ENCODE measurements at regions of chr1 and their contacts with region 1.

Region 1: GRCh38 chr1:22704440-22705067 is 6.1 kb upstream of the EPHB2 start:
- DNase-seq: peak; percentile 90 to 91
- ATAC-seq: peak; percentile 92
- H3K4me3 ChIP-seq: no peak overlapping the region
- H3K27ac ChIP-seq: no peak overlapping the region
- H3K4me1 ChIP-seq: no peaks in the 10 kb centered on the region
- H3K27me3 ChIP-seq: no peaks in the 10 kb centered on the region

Region 2: GRCh38 chr1:22749919-22750688 is 45.5 kb after region 1 on chr1:
- intact Hi-C with region 1: no loop called
- DNase-seq: peak; percentile 62 to 72
- ATAC-seq: peak; percentile 60
- H3K4me3 ChIP-seq: no peak overlapping the region
- H3K27ac ChIP-seq: no peak overlapping the region
- H3K4me1 ChIP-seq: no peaks in the 10 kb centered on the region
- H3K27me3 ChIP-seq: no peaks in the 10 kb centered on the region

Region 3: DNA sequence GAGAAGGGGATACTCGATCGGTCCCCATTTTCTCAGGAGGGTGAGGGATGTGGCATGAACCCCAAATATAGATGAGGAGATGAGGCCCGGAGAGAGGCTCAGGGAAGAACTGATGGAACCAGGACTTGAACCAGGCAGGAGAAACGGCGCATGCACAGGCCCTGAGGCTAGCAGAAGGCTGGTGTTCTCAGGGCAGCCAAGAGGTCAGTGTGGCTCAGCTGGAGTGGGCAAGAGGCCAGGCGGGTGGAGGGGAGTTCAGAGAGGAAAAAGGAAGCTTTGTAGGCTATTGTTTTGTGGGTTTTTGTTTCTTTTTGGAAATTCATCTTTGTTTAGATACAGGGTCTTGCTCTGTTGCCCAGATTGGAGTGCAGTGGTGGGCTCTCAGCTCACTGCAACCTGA is 146.1 kb after region 1 on chr1:
- intact Hi-C with region 1: no loop called
- DNase-seq: peak in 1 of 2 donors; percentile 88
- ATAC-seq: no peak
- H3K4me3 ChIP-seq: no peak overlapping the region
- H3K27ac ChIP-seq: no peak overlapping the region
- H3K4me1 ChIP-seq: no peaks in the 10 kb centered on the region
- H3K27me3 ChIP-seq: no peaks in the 10 kb centered on the region

Region 4: DNA sequence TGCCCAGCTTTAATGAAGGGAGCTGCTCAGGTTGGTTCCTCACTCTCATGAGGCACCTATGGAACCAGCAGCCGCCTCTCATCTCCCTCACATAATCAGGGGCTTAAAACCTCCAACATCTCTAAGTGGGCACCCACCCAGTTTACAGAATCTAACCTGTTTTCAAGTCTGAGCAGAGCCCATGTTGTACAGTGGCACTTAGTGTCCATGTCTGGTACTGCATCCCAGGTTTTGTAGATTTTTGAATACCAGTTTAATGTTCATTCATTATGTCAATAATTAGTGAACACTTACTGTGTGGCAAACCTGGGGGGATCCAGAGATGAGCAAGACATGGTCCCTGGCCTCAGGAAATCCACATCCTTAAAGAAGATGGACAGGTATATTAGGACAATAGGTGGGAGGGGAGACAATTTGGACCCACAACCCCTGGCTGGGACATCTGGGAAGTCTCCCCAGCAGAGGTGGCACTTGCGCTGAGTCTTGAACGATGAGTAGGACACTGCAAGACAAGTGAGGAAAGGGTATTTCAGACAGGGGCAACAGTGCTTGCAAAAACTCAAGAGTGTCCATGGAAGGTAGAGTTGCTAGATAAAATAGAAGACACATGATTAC is 184.8 kb after region 1 on chr1:
- intact Hi-C with region 1: loop called (anchors 2 to 5 kb)
- DNase-seq: no peak
- ATAC-seq: peak; percentile 16
- H3K4me3 ChIP-seq: no peak overlapping the region
- H3K27ac ChIP-seq: no peak overlapping the region
- H3K4me1 ChIP-seq: no peaks in the 10 kb centered on the region
- H3K27me3 ChIP-seq: no peaks in the 10 kb centered on the region

Region 5: GRCh38 chr1:22969304-22969709 is 264.8 kb after region 1 on chr1:
- intact Hi-C with region 1: loop called (anchors 10 kb)
- DNase-seq: peak in 1 of 2 donors; percentile 2
- ATAC-seq: no peak
- H3K4me3 ChIP-seq: no peak overlapping the region
- H3K27ac ChIP-seq: no peak overlapping the region
- H3K4me1 ChIP-seq: no peaks in the 10 kb centered on the region
- H3K27me3 ChIP-seq: no peaks in the 10 kb centered on the region